T-cell (primary cell): ENCODE measurements at regions of chr10 and their contacts with region 1.

Region 1: DNA sequence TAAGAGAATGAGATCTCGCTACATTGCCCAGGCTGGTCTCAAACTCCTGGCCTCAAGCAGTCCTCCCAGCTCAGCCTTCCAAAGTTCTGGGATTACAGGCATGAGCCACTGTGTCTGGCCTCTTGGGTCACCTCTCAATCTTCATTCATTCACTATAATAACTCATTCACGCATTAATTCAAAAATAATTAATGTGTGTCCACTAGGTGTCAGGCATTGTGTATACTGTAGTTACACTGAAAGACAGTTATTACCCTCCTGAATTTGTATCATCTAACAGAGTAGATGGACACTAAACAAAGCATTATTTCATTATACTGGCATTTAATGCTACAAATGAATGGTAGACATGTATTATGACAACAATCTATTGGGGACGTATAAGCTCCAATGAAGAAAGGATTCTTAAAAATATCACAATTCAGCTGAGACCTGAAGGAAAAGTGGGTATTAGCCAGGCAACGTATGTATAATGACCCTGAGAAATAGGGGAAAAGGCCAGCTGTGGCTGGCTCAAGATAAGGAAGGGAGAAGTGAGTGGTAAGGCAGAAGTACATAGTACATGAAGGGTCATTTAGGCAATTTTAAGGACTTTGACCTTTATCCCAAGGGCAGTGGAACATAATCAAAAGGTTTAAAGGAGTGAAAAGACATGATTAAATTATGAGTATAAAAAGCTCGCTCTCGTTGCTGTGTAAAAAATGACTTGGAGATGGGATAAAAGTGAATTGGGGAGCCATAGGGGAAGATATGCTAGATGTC is 150.7 kb downstream of the BTAF1 start:
- DNase-seq: no peak
- ATAC-seq: no peak
- H3K4me3 ChIP-seq: no peak overlapping the region
- H3K4me3 Mint-ChIP-seq: no peak overlapping the region
- H3K27ac ChIP-seq: no peak overlapping the region
- H3K27ac Mint-ChIP-seq: no peak overlapping the region
- H3K4me1 ChIP-seq: no peaks in the 10 kb centered on the region
- H3K4me1 Mint-ChIP-seq: no peaks in the 10 kb centered on the region
- H3K27me3 ChIP-seq: no peaks in the 10 kb centered on the region
- H3K27me3 Mint-ChIP-seq: no peaks in the 10 kb centered on the region

Region 2: DNA sequence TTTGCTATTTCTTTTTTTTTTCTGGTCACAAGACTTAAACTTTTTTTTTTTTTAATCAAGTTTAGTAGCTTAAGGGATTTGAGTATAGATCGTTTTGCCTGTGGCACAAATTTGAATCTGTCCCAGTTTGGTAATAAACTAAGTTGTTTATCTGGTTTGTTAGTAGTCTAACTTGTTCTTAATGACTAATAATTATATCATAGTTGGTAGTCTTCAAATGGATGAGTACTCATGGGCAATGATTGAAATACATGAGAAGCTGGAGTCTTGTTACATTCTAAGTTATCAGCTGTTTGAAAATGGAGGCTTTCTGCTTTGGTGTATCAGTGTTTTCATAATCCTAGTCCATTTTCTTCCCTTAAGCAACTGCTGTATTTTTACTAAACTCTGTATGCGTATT is 138.4 kb before region 1 on chr10:
- CTCF ChIA-PET with region 1: no interaction called
- POLR2A ChIA-PET with region 1: interaction called in 1 of 2 experiments, 10 read pairs
- DNase-seq: no peak
- ATAC-seq: no peak
- H3K4me3 ChIP-seq: no peak overlapping the region
- H3K4me3 Mint-ChIP-seq: no peak overlapping the region
- H3K27ac ChIP-seq: no peak overlapping the region
- H3K27ac Mint-ChIP-seq: no peak overlapping the region
- H3K4me1 ChIP-seq: peaks cover 2 to 3% of the 10 kb centered on the region in 2 experiments
- H3K4me1 Mint-ChIP-seq: peaks cover 58 to 66% (median 61%) of the 10 kb centered on the region in 3 donors
- H3K27me3 ChIP-seq: no peaks in the 10 kb centered on the region
- H3K27me3 Mint-ChIP-seq: no peaks in the 10 kb centered on the region

Region 3: GRCh38 chr10:92057361-92057760 is 16.9 kb before region 1 on chr10:
- CTCF ChIA-PET with region 1: no interaction called
- POLR2A ChIA-PET with region 1: no interaction called
- DNase-seq: no peak
- ATAC-seq: no peak
- H3K4me3 ChIP-seq: no peak overlapping the region
- H3K4me3 Mint-ChIP-seq: no peak overlapping the region
- H3K27ac ChIP-seq: no peak overlapping the region
- H3K27ac Mint-ChIP-seq: no peak overlapping the region
- H3K4me1 ChIP-seq: no peaks in the 10 kb centered on the region
- H3K4me1 Mint-ChIP-seq: peaks cover 0 to 9% (median 3%) of the 10 kb centered on the region in 3 donors
- H3K27me3 ChIP-seq: no peaks in the 10 kb centered on the region
- H3K27me3 Mint-ChIP-seq: no peaks in the 10 kb centered on the region

Region 4: GRCh38 chr10:92108120-92108519 is 33.8 kb after region 1 on chr10:
- CTCF ChIA-PET with region 1: interaction called in 1 of 2 experiments, 12 read pairs
- POLR2A ChIA-PET with region 1: no interaction called
- DNase-seq: no peak
- ATAC-seq: no peak
- H3K4me3 ChIP-seq: no peak overlapping the region
- H3K4me3 Mint-ChIP-seq: no peak overlapping the region
- H3K27ac ChIP-seq: no peak overlapping the region
- H3K27ac Mint-ChIP-seq: no peak overlapping the region
- H3K4me1 ChIP-seq: no peaks in the 10 kb centered on the region
- H3K4me1 Mint-ChIP-seq: peaks cover 0 to 2% (median 0%) of the 10 kb centered on the region in 3 donors
- H3K27me3 ChIP-seq: no peaks in the 10 kb centered on the region
- H3K27me3 Mint-ChIP-seq: no peaks in the 10 kb centered on the region